CD14-positive monocyte (primary cell): ENCODE measurements at regions of chr16 and their contacts with region 1.

Region 1: DNA sequence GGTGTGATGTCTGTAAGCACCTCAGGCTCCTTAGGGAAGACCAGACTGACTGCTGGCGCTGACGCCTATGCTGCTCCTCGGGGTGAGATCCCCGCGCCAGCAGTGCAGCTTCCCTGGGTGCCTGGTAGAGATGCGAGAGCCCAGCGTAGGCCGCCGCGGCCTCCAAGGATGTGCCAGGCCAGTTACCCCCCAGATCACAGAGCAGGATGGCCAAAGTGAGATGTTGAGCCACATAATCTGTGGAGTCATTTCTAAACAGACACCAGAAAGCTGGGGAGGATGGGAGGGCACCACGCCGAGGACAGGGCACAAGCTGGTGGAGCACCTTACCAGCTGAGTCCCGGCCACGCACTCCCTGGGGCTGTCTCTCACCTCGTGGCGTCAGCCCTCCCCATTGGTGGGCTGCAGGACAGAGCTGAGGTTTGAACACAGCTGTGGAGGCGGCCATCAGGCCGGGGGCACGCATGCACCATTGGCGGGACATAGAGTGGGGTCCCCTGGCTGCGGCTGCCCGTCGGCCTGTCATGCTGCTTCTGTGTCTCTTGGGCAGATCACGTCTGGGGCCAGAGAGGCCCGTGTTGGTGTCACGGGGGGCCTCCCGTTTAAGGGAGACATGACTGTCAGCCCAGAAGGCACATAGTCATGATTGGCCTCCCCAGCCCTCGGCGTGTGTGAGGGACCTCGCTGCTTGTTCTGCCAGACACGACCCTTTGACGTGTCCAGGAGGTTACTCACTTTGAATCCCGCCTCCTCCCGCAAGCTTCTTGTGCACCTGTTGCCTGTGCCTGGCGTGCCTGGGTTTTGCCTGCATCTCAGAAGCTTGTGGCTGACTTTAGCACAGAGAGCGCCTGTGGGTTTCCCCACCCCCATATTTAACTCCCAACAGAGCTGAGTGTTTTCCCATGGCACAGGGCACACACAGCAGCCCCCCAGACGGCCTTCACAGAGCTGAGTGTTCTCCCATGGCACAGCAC is 21.9 kb downstream of the MAPK8IP3 start:
- DNase-seq: no peak
- H3K4me3 ChIP-seq: no peak overlapping the region
- H3K4me3 Mint-ChIP-seq: no peak overlapping the region
- H3K27ac ChIP-seq: no peak overlapping the region
- H3K27ac Mint-ChIP-seq: no peak overlapping the region
- H3K4me1 ChIP-seq: peaks cover 23 to 28% of the 10 kb centered on the region in 2 donors
- H3K4me1 Mint-ChIP-seq: peaks cover 25% of the 10 kb centered on the region
- H3K27me3 ChIP-seq: no peaks in the 10 kb centered on the region
- H3K27me3 Mint-ChIP-seq: peaks cover 0 to 4% (median 0%) of the 10 kb centered on the region in 3 donors
- CTCF ChIP-seq: no peak

Region 2: GRCh38 chr16:1645914-1646525 is 81.9 kb before region 1 on chr16:
- intact Hi-C with region 1: no loop called
- DNase-seq: peak; percentile 26 to 74 (median 35)
- H3K4me3 ChIP-seq: no peak overlapping the region
- H3K4me3 Mint-ChIP-seq: no peak overlapping the region
- H3K27ac ChIP-seq: peak overlapping the region in 1 of 2 donors; percentile 65
- H3K27ac Mint-ChIP-seq: peak overlapping the region; percentile 3 to 84 (median 64)
- H3K4me1 ChIP-seq: peaks cover 13 to 24% of the 10 kb centered on the region in 2 donors
- H3K4me1 Mint-ChIP-seq: peaks cover 28% of the 10 kb centered on the region
- H3K27me3 ChIP-seq: no peaks in the 10 kb centered on the region
- H3K27me3 Mint-ChIP-seq: peaks cover 0 to 2% (median 2%) of the 10 kb centered on the region in 3 donors
- CTCF ChIP-seq: no peak

Region 3: GRCh38 chr16:1677802-1678496 is 50.0 kb before region 1 on chr16 and contains the start of gene JPT2:
- intact Hi-C with region 1: loop called in 1 of 2 experiments (anchors 5 kb)
- DNase-seq: peak; percentile 90 to 92 (median 90)
- H3K4me3 ChIP-seq: peak within 1 kb of the TSS; percentile 36 to 80 (median 51)
- H3K4me3 Mint-ChIP-seq: peak within 1 kb of the TSS; percentile 83 to 92
- H3K27ac ChIP-seq: peak within 1 kb of the TSS in 1 of 2 donors; percentile 7
- H3K27ac Mint-ChIP-seq: peak within 1 kb of the TSS in 5 of 7 donors; percentile 21 to 86 (median 75)
- H3K4me1 ChIP-seq: peaks cover 13 to 18% of the 10 kb centered on the region in 2 donors
- H3K4me1 Mint-ChIP-seq: peaks cover 18% of the 10 kb centered on the region
- H3K27me3 ChIP-seq: no peaks in the 10 kb centered on the region
- H3K27me3 Mint-ChIP-seq: peaks cover 0 to 2% (median 0%) of the 10 kb centered on the region in 3 donors
- CTCF ChIP-seq: no peak
- polyA plus RNA-seq, gene JPT2: 5.4 to 7.5 (median 5.8) TPM